CD8-positive, alpha-beta T cell (primary cell): ENCODE measurements at regions of chr6 and their contacts with region 1.

Region 1: GRCh38 chr6:111764238-111765175 is 108.7 kb downstream of the FYN start:
- DNase-seq: peak in 7 of 9 experiments; percentile 45 to 92 (median 70)
- ATAC-seq: peak; percentile 41
- H3K4me3 ChIP-seq: peak overlapping the region in 1 of 2 experiments; percentile 4
- H3K4me3 Mint-ChIP-seq: peak overlapping the region; percentile 70
- H3K27ac ChIP-seq: peak overlapping the region; percentile 41 to 99
- H3K27ac Mint-ChIP-seq: peak overlapping the region; percentile 99
- H3K4me1 ChIP-seq: peaks cover 98% of the 10 kb centered on the region
- H3K4me1 Mint-ChIP-seq: peaks cover 99% of the 10 kb centered on the region
- H3K27me3 ChIP-seq: no peaks in the 10 kb centered on the region
- H3K27me3 Mint-ChIP-seq: no peaks in the 10 kb centered on the region
- CTCF ChIP-seq: no peak

Region 2: DNA sequence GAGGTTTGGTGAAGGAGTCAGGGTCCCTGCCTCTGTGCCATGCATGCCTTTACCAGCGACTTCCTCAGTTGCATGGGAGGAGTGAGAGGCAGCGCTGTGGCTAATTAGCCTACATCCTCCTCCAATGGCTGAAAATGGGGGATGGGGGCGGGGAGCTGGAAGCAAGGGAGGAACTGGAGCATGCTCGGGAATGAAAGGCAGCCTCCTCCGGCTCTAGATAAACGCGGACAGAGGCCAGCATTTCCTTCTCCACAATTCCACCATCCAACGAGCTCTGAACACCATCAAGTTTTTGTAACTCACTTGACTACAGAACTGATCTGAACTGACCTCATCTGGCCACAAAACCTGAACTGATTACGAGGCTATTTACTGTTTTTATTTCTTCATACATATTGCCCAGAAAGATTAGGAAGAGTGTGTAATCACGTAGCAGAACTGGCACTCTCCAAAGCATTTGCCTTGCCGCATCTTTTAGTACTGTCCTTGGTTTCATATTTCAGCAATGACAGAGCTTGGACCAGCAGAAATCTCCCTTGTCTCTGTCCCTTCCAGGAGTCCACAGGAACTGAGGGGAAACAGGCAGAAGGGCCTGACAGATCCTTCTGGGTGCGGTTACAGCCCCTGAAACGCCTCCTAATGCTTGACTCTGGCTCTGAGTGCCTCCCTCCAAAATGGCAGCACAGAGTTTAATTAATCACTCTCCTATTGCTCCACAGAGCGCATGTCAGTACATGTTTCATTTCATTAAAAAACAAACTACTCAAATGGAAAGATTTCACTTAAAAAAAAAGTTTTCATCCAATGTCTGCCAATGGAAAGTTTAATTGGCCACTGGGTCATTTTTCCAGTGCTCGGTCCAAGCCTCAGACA is 100.6 kb before region 1 on chr6:
- CTCF ChIA-PET with region 1: no interaction called
- POLR2A ChIA-PET with region 1: no interaction called
- intact Hi-C with region 1: no loop called
- DNase-seq: no peak
- ATAC-seq: no peak
- H3K4me3 ChIP-seq: no peak overlapping the region
- H3K4me3 Mint-ChIP-seq: no peak overlapping the region
- H3K27ac ChIP-seq: no peak overlapping the region
- H3K27ac Mint-ChIP-seq: no peak overlapping the region
- H3K4me1 ChIP-seq: no peaks in the 10 kb centered on the region
- H3K4me1 Mint-ChIP-seq: peaks cover 9% of the 10 kb centered on the region
- H3K27me3 ChIP-seq: no peaks in the 10 kb centered on the region
- H3K27me3 Mint-ChIP-seq: no peaks in the 10 kb centered on the region
- CTCF ChIP-seq: no peak

Region 3: DNA sequence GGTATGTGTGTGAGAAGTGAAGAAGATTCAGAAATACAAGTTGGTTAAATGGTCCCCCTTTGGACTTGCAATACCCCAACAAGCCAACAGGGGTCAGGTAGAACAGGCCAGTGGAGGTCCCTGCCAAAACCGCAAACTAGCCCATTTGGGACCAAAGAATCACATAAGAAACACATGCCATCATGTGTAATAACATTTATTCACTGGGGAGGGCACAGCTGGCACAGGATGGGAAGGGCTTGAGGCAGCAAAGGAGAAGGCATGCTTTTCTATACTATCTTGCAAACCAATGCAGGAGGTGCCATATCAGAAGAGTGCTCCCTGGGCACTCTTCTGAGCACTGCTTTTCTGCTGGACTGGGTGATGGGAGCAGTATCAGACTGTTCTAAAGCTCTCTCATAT is 42.8 kb before region 1 on chr6:
- CTCF ChIA-PET with region 1: no interaction called
- POLR2A ChIA-PET with region 1: interaction called, 4 read pairs
- intact Hi-C with region 1: loop called (anchors 5 kb)
- DNase-seq: peak in 7 of 9 experiments; percentile 21 to 74 (median 58)
- ATAC-seq: peak; percentile 39
- H3K4me3 ChIP-seq: no peak overlapping the region
- H3K4me3 Mint-ChIP-seq: no peak overlapping the region
- H3K27ac ChIP-seq: peak overlapping the region in 1 of 2 experiments; percentile 72
- H3K27ac Mint-ChIP-seq: peak overlapping the region; percentile 83
- H3K4me1 ChIP-seq: peaks cover 46% of the 10 kb centered on the region
- H3K4me1 Mint-ChIP-seq: peaks cover 86% of the 10 kb centered on the region
- H3K27me3 ChIP-seq: no peaks in the 10 kb centered on the region
- H3K27me3 Mint-ChIP-seq: no peaks in the 10 kb centered on the region
- CTCF ChIP-seq: peak; percentile 66

Region 4: GRCh38 chr6:111750753-111751684 is 13.5 kb before region 1 on chr6:
- CTCF ChIA-PET with region 1: interaction called, 13 read pairs
- POLR2A ChIA-PET with region 1: interaction called, 8 read pairs
- intact Hi-C with region 1: loop called in 1 of 2 experiments (anchors 1 kb)
- DNase-seq: peak in 8 of 9 experiments; percentile 42 to 93 (median 67)
- ATAC-seq: peak; percentile 76
- H3K4me3 ChIP-seq: peak overlapping the region in 1 of 2 experiments; percentile 9
- H3K4me3 Mint-ChIP-seq: peak overlapping the region; percentile 53
- H3K27ac ChIP-seq: peak overlapping the region; percentile 73 to 99
- H3K27ac Mint-ChIP-seq: peak overlapping the region; percentile 97
- H3K4me1 ChIP-seq: peaks cover 97% of the 10 kb centered on the region
- H3K4me1 Mint-ChIP-seq: peaks cover 95% of the 10 kb centered on the region
- H3K27me3 ChIP-seq: no peaks in the 10 kb centered on the region
- H3K27me3 Mint-ChIP-seq: no peaks in the 10 kb centered on the region
- CTCF ChIP-seq: no peak

Region 5: GRCh38 chr6:111777357-111777756 is 12.8 kb after region 1 on chr6:
- CTCF ChIA-PET with region 1: interaction called, 8 read pairs
- POLR2A ChIA-PET with region 1: interaction called, 9 read pairs
- intact Hi-C with region 1: loop called in 1 of 2 experiments (anchors 1 kb)
- DNase-seq: peak in 4 of 9 experiments; percentile 31 to 82 (median 58)
- ATAC-seq: peak; percentile 60
- H3K4me3 ChIP-seq: no peak overlapping the region
- H3K4me3 Mint-ChIP-seq: peak overlapping the region; percentile 35
- H3K27ac ChIP-seq: peak overlapping the region in 1 of 2 experiments; percentile 64
- H3K27ac Mint-ChIP-seq: peak overlapping the region; percentile 91
- H3K4me1 ChIP-seq: peaks cover 74% of the 10 kb centered on the region
- H3K4me1 Mint-ChIP-seq: peaks cover 90% of the 10 kb centered on the region
- H3K27me3 ChIP-seq: no peaks in the 10 kb centered on the region
- H3K27me3 Mint-ChIP-seq: no peaks in the 10 kb centered on the region
- CTCF ChIP-seq: no peak

Region 6: GRCh38 chr6:111804627-111805235 is 40.2 kb after region 1 on chr6:
- CTCF ChIA-PET with region 1: no interaction called
- POLR2A ChIA-PET with region 1: interaction called, 3 read pairs
- intact Hi-C with region 1: loop called in 1 of 2 experiments (anchors 2 kb)
- DNase-seq: peak; percentile 27 to 92 (median 62)
- ATAC-seq: peak; percentile 73
- H3K4me3 ChIP-seq: no peak overlapping the region
- H3K4me3 Mint-ChIP-seq: peak overlapping the region; percentile 60
- H3K27ac ChIP-seq: peak overlapping the region; percentile 16 to 84
- H3K27ac Mint-ChIP-seq: peak overlapping the region; percentile 97
- H3K4me1 ChIP-seq: peaks cover 70% of the 10 kb centered on the region
- H3K4me1 Mint-ChIP-seq: peaks cover 95% of the 10 kb centered on the region
- H3K27me3 ChIP-seq: no peaks in the 10 kb centered on the region
- H3K27me3 Mint-ChIP-seq: no peaks in the 10 kb centered on the region
- CTCF ChIP-seq: peak; percentile 53

Region 7: GRCh38 chr6:113381959-113382358 is 1617.5 kb after region 1 on chr6:
- CTCF ChIA-PET with region 1: no interaction called
- POLR2A ChIA-PET with region 1: no interaction called
- intact Hi-C with region 1: no loop called
- DNase-seq: peak in 1 of 9 experiments; percentile 2
- ATAC-seq: no peak
- H3K4me3 ChIP-seq: no peak overlapping the region
- H3K4me3 Mint-ChIP-seq: no peak overlapping the region
- H3K27ac ChIP-seq: no peak overlapping the region
- H3K27ac Mint-ChIP-seq: no peak overlapping the region
- H3K4me1 ChIP-seq: no peaks in the 10 kb centered on the region
- H3K4me1 Mint-ChIP-seq: no peaks in the 10 kb centered on the region
- H3K27me3 ChIP-seq: no peaks in the 10 kb centered on the region
- H3K27me3 Mint-ChIP-seq: no peaks in the 10 kb centered on the region
- CTCF ChIP-seq: no peak